ENCODE measurements at regions of chr3 and their contacts with region 1.

Region 1: GRCh38 chr3:108489771-108490170 is 20.6 kb downstream of the MYH15 start:
- DNase-seq: no peak
- ATAC-seq: peak; percentile 76; the same call in 1 of the 2 replicates
- H3K4me3 ChIP-seq: no peak overlapping the region
- H3K27ac ChIP-seq: no peak overlapping the region
- H3K4me1 ChIP-seq: peaks cover 3% of the 10 kb centered on the region; the same call in 1 of the 2 replicates
- H3K27me3 ChIP-seq: no peaks in the 10 kb centered on the region
- CTCF ChIP-seq: peak; percentile 80

Region 2: GRCh38 chr3:108552267-108553159 is 62.7 kb after region 1 on chr3:
- CTCF ChIA-PET with region 1: interaction called, 6 read pairs
- POLR2A ChIA-PET with region 1: interaction called, 3 read pairs
- in situ Hi-C with region 1: no loop called
- intact Hi-C with region 1: loop called (anchors 1 kb)
- DNase-seq: peak; percentile 17
- ATAC-seq: no peak
- H3K4me3 ChIP-seq: no peak overlapping the region
- H3K27ac ChIP-seq: no peak overlapping the region
- H3K4me1 ChIP-seq: peaks cover 3% of the 10 kb centered on the region
- H3K27me3 ChIP-seq: no peaks in the 10 kb centered on the region
- CTCF ChIP-seq: peak; percentile 57; the same call in 1 of the 2 replicates

Region 3: DNA sequence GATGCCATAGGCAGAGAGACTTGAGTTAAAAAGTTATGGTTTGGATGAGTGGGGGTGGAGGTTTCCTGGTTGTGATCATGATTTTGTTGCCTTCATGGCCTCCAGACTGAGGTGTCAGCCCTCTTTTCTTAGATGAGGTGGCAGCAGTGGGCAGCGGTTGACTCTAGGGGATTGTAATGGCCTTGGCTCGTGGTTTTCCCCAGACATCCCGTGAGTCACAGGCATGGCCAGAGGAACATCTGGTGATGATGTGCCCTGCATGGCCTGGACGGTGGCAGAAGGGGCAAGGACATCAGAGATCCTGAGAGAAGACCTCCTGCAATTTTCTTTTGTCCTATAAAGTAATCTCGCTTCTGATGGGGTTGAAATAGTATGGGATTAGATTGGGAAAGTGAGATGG is 255.0 kb after region 1 on chr3:
- CTCF ChIA-PET with region 1: no interaction called
- POLR2A ChIA-PET with region 1: no interaction called
- in situ Hi-C with region 1: no loop called
- intact Hi-C with region 1: no loop called
- DNase-seq: no peak
- ATAC-seq: no peak
- H3K4me3 ChIP-seq: no peak overlapping the region
- H3K27ac ChIP-seq: no peak overlapping the region
- H3K4me1 ChIP-seq: no peaks in the 10 kb centered on the region
- H3K27me3 ChIP-seq: no peaks in the 10 kb centered on the region; the same call in 1 of the 2 replicates
- CTCF ChIP-seq: no peak

Region 4: DNA sequence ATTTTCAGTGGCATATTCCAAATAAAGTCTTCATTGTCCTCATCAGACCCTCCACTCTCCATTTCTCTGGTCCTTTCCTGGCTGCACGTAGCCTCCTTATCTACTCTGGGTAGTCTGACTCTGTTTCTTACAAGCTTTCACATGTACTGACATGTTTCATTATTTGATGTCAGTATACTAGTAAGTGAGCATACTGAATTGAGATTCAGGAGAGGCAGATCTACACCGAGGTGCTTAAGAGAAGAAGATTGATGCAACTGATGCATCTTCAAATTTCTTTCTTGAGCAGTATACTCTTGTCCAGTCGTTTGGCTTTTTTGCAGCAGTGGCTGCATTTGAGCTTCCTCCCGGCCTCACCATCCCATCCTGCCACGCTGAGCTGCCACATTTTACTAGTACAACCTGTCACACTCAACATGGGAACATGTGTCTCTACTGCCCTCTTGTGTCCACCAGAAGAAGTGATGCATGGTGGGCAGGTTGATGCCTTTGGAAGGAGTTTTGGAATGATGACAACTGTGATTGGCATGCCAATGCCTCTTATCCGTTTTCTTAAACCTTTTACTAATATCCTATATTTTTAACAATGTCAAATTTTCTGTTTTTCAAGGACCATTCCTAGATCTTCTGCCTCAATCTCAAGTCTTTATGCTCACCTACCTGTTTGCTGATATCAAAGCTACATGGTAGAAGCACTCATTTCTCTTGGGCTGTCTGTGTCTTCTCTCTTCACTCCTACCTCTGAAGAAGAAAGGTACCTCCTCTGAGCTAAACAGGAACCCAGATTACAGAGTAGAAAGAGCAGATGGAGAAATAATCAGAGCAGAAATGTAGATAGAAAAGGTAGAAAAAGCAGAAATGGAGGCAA is 425.2 kb after region 1 on chr3:
- CTCF ChIA-PET with region 1: no interaction called
- POLR2A ChIA-PET with region 1: no interaction called
- in situ Hi-C with region 1: no loop called
- intact Hi-C with region 1: loop called (anchors 2 kb)
- DNase-seq: peak; percentile 55
- ATAC-seq: peak; percentile 95
- H3K4me3 ChIP-seq: no peak overlapping the region
- H3K27ac ChIP-seq: no peak overlapping the region
- H3K4me1 ChIP-seq: no peaks in the 10 kb centered on the region
- H3K27me3 ChIP-seq: peaks cover 33% of the 10 kb centered on the region
- CTCF ChIP-seq: peak; percentile 91